SK-N-SH (cell line): ENCODE measurements at regions of chr2 and their contacts with region 1.

Region 1: DNA sequence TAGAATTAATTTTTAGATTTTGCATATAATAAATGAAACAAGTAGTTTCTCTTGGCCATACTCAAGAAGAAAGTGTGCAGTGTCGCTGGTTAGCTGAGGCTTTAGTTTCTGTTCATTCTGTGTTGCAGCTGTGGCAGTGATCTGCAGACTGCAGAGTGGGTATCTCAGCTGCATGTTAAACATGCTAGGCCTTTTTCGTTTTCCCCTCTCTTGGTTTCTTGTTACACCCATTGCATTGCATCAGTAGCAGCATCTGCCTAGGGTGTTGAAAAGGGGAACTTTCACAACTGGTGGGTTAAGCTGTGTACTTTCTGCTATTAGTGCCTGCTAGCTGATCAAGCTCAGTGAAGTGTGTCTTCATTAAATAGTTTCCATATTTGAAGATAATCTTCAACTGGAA is 51.3 kb downstream of the ACSL3 start:
- DNase-seq: no peak
- H3K4me3 ChIP-seq: no peak overlapping the region
- H3K27ac ChIP-seq: no peak overlapping the region
- H3K4me1 ChIP-seq: peaks cover 0 to 20% of the 10 kb centered on the region in 2 experiments; a peak in 2 of 4 replicates
- H3K27me3 ChIP-seq: no peaks in the 10 kb centered on the region
- CTCF ChIP-seq: no peak
- EP300 ChIP-seq: no peak
- RAD21 ChIP-seq: no peak

Region 2: GRCh38 chr2:221716426-221717303 is 1195.5 kb before region 1 on chr2:
- CTCF ChIA-PET with region 1: no interaction called
- POLR2A ChIA-PET with region 1: no interaction called
- DNase-seq: no peak
- H3K4me3 ChIP-seq: no peak overlapping the region
- H3K27ac ChIP-seq: no peak overlapping the region
- H3K4me1 ChIP-seq: no peaks in the 10 kb centered on the region
- H3K27me3 ChIP-seq: no peaks in the 10 kb centered on the region
- CTCF ChIP-seq: no peak
- EP300 ChIP-seq: no peak
- RAD21 ChIP-seq: no peak

Region 3: DNA sequence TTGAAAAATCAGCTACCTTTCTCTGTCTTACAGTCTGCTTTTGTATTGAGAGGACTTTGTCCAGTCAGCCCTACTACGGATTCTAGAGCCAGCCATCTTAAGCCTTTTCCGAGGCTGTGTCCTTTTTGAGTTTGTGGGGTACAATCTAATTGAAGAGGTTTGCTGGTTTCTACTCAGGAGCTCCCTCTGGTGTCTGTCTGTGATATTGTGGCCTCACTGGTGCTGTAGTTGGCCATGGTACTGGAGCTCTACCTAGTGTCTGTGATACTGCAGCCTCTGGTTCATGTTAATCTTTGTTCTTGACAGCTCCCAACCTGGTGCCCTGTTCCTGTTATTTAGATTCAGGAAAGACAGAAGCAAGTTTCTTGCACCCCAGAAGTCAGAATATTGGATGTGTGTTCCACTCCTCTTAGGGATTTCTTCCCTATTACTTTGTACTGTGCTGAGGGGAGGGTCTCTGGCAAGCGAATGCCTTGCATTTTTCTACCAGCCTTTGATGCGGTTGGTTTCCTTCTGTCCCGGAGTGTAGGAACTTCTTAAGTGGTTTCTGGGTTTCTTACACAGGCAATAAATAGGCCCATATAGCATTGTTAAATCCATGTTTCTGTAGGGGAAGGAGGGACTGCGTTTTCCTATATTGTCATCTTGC is 27.2 kb after region 1 on chr2:
- CTCF ChIA-PET with region 1: interaction called, 15 read pairs
- POLR2A ChIA-PET with region 1: no interaction called
- DNase-seq: peak; percentile 35
- H3K4me3 ChIP-seq: peak overlapping the region in 1 of 2 experiments; percentile 32; a peak in 1 of 4 replicates
- H3K27ac ChIP-seq: no peak overlapping the region
- H3K4me1 ChIP-seq: peaks cover 0 to 21% of the 10 kb centered on the region in 2 experiments; a peak in 2 of 4 replicates
- H3K27me3 ChIP-seq: no peaks in the 10 kb centered on the region
- CTCF ChIP-seq: peak; percentile 66
- EP300 ChIP-seq: no peak
- RAD21 ChIP-seq: peak; percentile 59

Region 4: DNA sequence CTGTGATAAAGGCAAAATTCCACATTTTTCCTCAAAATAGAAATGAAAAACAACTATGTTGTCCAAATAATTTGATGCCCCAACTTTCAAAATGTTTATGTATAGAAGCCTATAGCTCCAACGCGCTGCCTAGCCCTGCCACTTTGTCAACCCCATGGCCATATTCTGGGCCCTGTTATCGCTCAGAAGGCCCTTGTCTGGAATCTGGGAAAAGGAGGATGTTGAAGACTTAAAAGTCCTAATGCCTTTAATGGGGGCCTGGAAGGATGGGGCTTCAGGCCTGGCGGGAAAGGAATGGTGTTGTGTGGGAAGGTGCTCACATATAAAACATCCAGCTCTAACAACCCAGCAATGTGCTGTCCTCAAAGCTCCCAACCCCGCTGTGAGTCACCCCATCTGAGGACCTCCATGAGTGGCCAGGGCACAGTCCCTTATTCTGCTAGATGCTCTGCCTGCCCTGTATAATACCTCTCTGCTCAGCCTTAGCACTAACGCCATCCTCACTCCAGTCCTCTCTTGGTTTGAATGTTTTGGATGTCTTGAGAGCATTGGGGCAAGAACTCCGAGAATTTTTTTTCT is 34.7 kb after region 1 on chr2:
- CTCF ChIA-PET with region 1: interaction called, 10 read pairs
- POLR2A ChIA-PET with region 1: no interaction called
- DNase-seq: no peak
- H3K4me3 ChIP-seq: no peak overlapping the region
- H3K27ac ChIP-seq: no peak overlapping the region
- H3K4me1 ChIP-seq: peaks cover 4 to 33% of the 10 kb centered on the region in 2 experiments; a peak in 3 of 4 replicates
- H3K27me3 ChIP-seq: no peaks in the 10 kb centered on the region
- CTCF ChIP-seq: no peak
- EP300 ChIP-seq: no peak
- RAD21 ChIP-seq: no peak

Region 5: DNA sequence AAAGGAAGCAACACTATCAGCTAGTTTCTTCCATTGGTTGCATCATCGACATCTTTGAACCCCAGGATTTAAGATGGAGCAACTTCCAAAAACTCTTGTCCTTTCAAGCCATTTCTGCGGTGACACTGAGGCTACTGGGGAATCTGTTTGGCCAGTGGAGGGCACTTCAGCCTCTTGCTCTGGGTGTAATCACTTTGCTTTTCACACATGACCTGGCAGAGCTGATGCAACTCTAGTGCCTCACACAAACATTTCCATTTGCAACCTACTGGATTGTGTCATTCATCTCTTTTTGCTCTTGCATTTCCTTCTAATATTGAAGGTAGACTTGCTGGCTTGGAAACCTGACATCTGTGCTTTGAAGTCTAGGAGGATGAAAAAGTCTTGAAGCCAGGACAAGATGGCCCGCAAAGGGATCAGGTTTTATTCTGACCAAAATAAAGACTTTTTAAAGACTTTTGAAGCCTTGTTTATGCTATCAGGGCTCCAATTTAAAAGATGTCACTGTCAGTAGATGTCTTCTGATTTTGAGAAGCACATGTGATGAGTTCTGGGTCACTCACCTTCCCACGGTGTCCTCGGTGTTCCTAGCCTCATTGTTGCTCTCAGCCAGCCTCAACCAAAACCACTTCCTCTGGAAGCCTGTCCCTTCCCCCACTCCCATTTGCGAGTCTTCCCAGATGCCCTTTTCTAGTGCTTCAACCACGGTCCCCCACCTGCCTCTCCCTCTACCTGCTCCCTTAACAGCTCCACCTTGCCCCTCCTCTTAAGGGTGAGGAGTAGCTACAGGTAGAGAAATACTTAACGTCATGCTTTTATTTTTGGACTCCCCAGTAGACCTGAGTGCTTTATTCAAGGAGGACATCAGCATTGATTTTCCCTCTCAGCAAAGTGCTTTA is 70.1 kb after region 1 on chr2:
- CTCF ChIA-PET with region 1: no interaction called
- POLR2A ChIA-PET with region 1: no interaction called
- DNase-seq: peak; percentile 31
- H3K4me3 ChIP-seq: no peak overlapping the region
- H3K27ac ChIP-seq: peak overlapping the region; percentile 42 to 48; a peak in 2 of 4 replicates
- H3K4me1 ChIP-seq: peaks cover 7 to 8% of the 10 kb centered on the region in 2 experiments; a peak in 2 of 4 replicates
- H3K27me3 ChIP-seq: no peaks in the 10 kb centered on the region
- CTCF ChIP-seq: peak; percentile 60
- EP300 ChIP-seq: no peak
- RAD21 ChIP-seq: peak; percentile 88

Region 6: DNA sequence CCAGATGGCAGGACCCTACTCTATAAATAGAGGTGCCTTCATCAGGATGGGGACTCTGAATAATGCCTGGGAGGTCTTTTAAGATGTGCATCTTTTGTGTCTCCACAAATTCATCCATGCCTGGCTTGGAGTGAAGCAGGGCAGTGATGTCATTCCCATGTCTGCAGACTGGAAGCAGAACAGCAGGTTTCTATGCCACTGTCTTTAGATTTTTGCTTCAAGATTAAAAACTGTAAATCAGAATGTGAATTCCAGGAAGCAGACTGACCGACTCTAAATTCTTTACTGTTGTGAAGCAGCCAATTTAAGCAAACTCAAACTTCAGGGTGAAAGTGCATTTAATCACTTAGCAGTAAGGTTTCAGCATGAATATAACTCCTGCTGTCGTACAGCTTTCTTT is 530.7 kb after region 1 on chr2:
- CTCF ChIA-PET with region 1: no interaction called
- POLR2A ChIA-PET with region 1: no interaction called
- DNase-seq: no peak
- H3K4me3 ChIP-seq: no peak overlapping the region
- H3K27ac ChIP-seq: peak overlapping the region; percentile 52 to 58; a peak in 3 of 4 replicates
- H3K4me1 ChIP-seq: 0 out of 4 replicates have a peak, but pooled peaks cover 0 to 8% of the 10 kb centered on the region in 2 experiments
- H3K27me3 ChIP-seq: no peaks in the 10 kb centered on the region
- CTCF ChIP-seq: no peak
- EP300 ChIP-seq: no peak
- RAD21 ChIP-seq: no peak